SK-N-SH (cell line): ENCODE measurements at regions of chr12 and their contacts with region 1.

Region 1: GRCh38 chr12:6688999-6689882 is at the start of gene ZNF384:
- DNase-seq: peak; percentile 94
- H3K4me3 ChIP-seq: peak within 1 kb of the TSS; percentile 78 to 79
- H3K27ac ChIP-seq: peak within 1 kb of the TSS; percentile 90 to 99
- H3K4me1 ChIP-seq: peaks cover 8% of the 10 kb centered on the region in 2 experiments; a peak in 2 of 4 replicates
- H3K27me3 ChIP-seq: no peaks in the 10 kb centered on the region
- CTCF ChIP-seq: no peak
- EP300 ChIP-seq: no peak
- RAD21 ChIP-seq: no peak
- polyA plus RNA-seq, gene ZNF384: 64.9 and 80.4 TPM in 2 replicates

Region 2: DNA sequence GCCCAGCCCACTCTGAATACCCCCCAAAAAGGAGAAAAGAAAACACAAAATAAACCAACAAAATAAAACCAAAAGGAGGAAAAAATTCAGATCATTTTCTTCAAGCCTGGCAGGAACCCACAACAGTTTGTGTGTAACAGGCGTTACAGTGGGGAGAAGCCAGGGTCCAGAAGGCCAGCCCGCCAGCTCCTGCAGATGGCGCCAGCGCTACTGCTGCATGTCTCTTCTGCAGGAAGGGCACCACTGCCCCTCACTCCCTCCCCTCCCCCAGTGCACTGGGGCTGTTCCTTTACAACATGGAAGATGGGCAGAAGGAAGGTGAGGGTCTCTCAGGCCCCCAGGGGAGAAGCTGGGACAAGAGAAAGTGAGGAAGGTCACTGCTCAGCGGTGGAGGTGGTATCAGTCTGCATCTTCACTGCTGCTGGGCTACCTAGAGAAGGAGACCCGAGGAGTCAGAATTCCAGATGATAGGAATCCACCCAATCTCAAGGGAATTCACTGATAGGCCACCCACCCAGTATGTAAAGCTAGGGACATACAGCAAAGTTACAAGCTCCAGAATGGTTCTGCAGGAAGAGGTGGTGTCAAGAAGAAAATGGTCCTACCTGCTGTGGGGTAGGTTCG is 118.9 kb before region 1 on chr12:
- CTCF ChIA-PET with region 1: interaction called, 9 read pairs
- POLR2A ChIA-PET with region 1: interaction called, 12 read pairs
- DNase-seq: peak; percentile 83
- H3K4me3 ChIP-seq: no peak overlapping the region
- H3K27ac ChIP-seq: peak overlapping the region in 1 of 2 experiments; percentile 27; a peak in 1 of 4 replicates
- H3K4me1 ChIP-seq: peaks cover 4 to 8% of the 10 kb centered on the region in 2 experiments; a peak in 2 of 4 replicates
- H3K27me3 ChIP-seq: no peaks in the 10 kb centered on the region
- CTCF ChIP-seq: peak; percentile 71
- EP300 ChIP-seq: no peak
- RAD21 ChIP-seq: peak; percentile 53

Region 3: GRCh38 chr12:6662906-6663742 is 26.1 kb before region 1 on chr12 and contains the start of gene ING4:
- CTCF ChIA-PET with region 1: interaction called, 12 read pairs
- POLR2A ChIA-PET with region 1: interaction called, 16 read pairs
- DNase-seq: peak; percentile 93
- H3K4me3 ChIP-seq: peak within 1 kb of the TSS; percentile 74 to 93
- H3K27ac ChIP-seq: peak within 1 kb of the TSS; percentile 73 to 79
- H3K4me1 ChIP-seq: peaks cover 4% of the 10 kb centered on the region in 2 experiments; a peak in 3 of 4 replicates
- H3K27me3 ChIP-seq: no peaks in the 10 kb centered on the region
- CTCF ChIP-seq: no peak
- EP300 ChIP-seq: no peak; a peak in 1 of 4 replicates
- RAD21 ChIP-seq: no peak
- polyA plus RNA-seq, gene ING4: 96.5 and 163 TPM in 2 replicates

Region 4: DNA sequence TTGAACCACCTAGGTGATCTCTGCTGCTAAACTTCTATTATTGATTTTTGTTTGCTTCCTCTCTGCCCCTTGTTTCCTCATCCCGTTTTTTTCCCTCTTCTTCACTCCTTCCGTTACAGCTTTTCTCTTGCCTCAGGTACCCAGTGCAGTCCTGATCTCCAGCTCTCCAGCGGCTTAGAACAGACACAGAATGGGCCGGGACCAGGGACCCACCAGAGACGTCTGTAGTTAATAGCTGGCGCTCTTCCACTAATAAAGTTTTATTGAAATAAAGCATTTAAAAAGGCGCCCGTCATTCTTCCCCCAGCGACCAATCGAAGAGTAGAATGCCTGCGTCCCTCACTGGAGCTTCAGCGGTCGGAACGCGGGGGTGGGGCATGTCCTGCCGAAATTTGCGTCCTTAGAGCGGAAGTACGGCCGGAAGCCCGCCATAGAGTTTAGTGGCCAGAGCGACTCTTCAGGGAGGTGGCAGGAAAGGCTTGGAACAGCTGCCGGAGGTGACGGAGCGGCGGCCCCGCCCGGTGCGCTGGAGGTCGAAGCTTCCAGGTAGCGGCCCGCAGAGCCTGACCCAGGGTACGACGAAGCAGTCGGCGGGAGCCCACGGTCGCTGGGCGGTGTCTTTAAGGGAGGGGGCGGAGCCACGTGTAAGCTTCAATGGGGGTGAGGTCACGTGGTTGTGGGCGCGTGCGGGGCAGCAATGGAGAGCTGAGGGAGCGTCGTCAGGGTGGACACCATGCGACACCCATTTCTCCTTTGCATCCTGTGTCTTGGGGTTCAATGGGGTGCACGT is 34.6 kb after region 1 on chr12 and contains the start of gene COPS7A:
- CTCF ChIA-PET with region 1: interaction called, 5 read pairs
- POLR2A ChIA-PET with region 1: interaction called, 50 read pairs
- DNase-seq: peak; percentile 96
- H3K4me3 ChIP-seq: peak within 1 kb of the TSS; percentile 57 to 65
- H3K27ac ChIP-seq: peak within 1 kb of the TSS; percentile 84 to 87
- H3K4me1 ChIP-seq: peaks cover 0 to 9% of the 10 kb centered on the region in 2 experiments; a peak in 1 of 4 replicates
- H3K27me3 ChIP-seq: no peaks in the 10 kb centered on the region
- CTCF ChIP-seq: no peak
- EP300 ChIP-seq: no peak
- RAD21 ChIP-seq: no peak
- polyA plus RNA-seq, gene COPS7A: 191 and 231 TPM in 2 replicates

Region 5: GRCh38 chr12:6883252-6883651 is 194.0 kb after region 1 on chr12:
- CTCF ChIA-PET with region 1: no interaction called
- POLR2A ChIA-PET with region 1: no interaction called
- DNase-seq: no peak
- H3K4me3 ChIP-seq: no peak overlapping the region
- H3K27ac ChIP-seq: no peak overlapping the region
- H3K4me1 ChIP-seq: no peaks in the 10 kb centered on the region
- H3K27me3 ChIP-seq: no peaks in the 10 kb centered on the region
- CTCF ChIP-seq: no peak
- EP300 ChIP-seq: no peak
- RAD21 ChIP-seq: no peak

Region 6: DNA sequence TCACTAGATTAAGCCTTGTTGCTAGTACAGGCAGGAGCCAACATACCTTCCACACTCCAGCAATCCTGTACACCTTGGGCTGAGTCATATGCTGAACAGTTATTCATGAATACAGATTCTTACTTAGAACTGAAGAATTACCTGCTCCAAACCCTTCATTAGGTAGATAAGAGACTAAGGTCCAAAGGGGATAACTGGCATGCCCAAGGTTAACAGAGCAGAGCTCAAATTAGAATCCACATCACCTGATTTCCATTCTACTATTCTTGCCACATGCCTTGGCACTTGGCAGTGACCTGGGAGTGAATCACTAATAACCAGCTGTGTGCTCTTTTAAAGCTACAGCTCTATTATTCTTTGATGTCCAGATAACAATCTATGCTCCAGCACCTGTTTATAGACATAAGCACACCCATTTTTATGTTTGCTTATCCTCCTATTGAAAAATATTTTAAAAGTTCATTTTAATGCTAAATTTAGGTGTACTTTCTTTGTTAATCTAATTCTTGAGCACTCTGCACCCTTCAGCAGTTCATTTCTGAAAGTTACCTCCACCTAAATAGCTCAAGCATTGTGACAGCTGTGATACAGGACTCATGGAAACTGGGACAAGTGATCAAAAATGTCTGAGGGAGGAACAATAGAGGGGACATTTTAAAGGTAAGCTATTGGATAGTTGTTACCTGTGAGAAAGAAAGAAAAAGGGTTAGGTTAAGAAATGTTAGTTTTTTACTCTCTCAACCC is 309.6 kb after region 1 on chr12:
- CTCF ChIA-PET with region 1: no interaction called
- POLR2A ChIA-PET with region 1: no interaction called
- DNase-seq: no peak
- H3K4me3 ChIP-seq: no peak overlapping the region
- H3K27ac ChIP-seq: no peak overlapping the region
- H3K4me1 ChIP-seq: no peaks in the 10 kb centered on the region; a peak in 1 of 4 replicates
- H3K27me3 ChIP-seq: no peaks in the 10 kb centered on the region
- CTCF ChIP-seq: no peak
- EP300 ChIP-seq: no peak
- RAD21 ChIP-seq: no peak